ENCODE measurements at regions of chr17 and their contacts with region 1.

Region 1: DNA sequence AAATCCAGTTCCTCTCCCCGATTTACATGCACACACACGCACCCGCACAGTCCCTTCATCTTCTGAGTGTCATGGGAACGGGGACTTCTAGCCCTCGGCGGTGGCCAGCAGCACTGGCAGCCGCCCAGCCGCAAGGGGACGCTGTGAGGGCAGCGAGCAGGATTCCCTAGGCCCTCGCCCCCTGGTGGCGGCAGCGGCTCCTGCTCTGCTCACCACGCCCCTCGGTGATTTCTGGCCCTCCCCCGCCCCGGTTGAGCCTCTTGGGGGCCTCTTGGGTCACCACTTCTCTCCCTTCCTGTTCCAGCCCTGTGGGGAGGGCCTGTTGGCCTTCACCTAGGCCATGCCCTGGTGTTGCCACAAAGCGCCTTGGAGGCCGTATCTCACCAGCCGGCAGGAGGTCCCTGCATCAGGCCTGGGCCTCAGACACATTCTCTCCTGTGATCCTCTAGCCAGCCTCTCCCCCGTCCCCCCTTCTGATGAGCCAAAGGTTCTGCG is 75.2 kb upstream of the KSR1 start:
- DNase-seq: peak; percentile 27
- ATAC-seq: peak; percentile 96
- H3K4me3 ChIP-seq: no peak overlapping the region
- H3K27ac ChIP-seq: no peak overlapping the region
- H3K4me1 ChIP-seq: peaks cover 14% of the 10 kb centered on the region
- H3K27me3 ChIP-seq: no peaks in the 10 kb centered on the region
- CTCF ChIP-seq: peak; percentile 100; a peak in 5 of 6 replicates
- EP300 ChIP-seq: no peak
- POLR2A ChIP-seq: no peak
- RAD21 ChIP-seq: peak; percentile 67

Region 2: GRCh38 chr17:27586203-27586721 is 205.2 kb after region 1 on chr17:
- CTCF ChIA-PET with region 1: interaction called, 3 read pairs
- POLR2A ChIA-PET with region 1: no interaction called
- RAD21 ChIA-PET with region 1: no interaction called
- SMC1A ChIA-PET with region 1: no interaction called
- in situ Hi-C with region 1: loop called (anchors 10 kb)
- intact Hi-C with region 1: no loop called
- DNase-seq: no peak
- ATAC-seq: no peak
- H3K4me3 ChIP-seq: no peak overlapping the region
- H3K27ac ChIP-seq: no peak overlapping the region
- H3K4me1 ChIP-seq: peaks cover 5% of the 10 kb centered on the region; the same call in 1 of the 2 replicates
- H3K27me3 ChIP-seq: no peaks in the 10 kb centered on the region
- CTCF ChIP-seq: no peak
- EP300 ChIP-seq: no peak
- POLR2A ChIP-seq: no peak
- RAD21 ChIP-seq: no peak

Measured in GM12878 (cell line).